Activated CD8-positive, alpha-beta memory T cell treated with anti-CD3 and anti-CD28 coated beads, Interleukin-2, amount 10 ng/mL, durations not matched to agents 7 days and 5 days (primary cell): ENCODE measurements at regions of chr12 and their contacts with region 1.

Region 1: DNA sequence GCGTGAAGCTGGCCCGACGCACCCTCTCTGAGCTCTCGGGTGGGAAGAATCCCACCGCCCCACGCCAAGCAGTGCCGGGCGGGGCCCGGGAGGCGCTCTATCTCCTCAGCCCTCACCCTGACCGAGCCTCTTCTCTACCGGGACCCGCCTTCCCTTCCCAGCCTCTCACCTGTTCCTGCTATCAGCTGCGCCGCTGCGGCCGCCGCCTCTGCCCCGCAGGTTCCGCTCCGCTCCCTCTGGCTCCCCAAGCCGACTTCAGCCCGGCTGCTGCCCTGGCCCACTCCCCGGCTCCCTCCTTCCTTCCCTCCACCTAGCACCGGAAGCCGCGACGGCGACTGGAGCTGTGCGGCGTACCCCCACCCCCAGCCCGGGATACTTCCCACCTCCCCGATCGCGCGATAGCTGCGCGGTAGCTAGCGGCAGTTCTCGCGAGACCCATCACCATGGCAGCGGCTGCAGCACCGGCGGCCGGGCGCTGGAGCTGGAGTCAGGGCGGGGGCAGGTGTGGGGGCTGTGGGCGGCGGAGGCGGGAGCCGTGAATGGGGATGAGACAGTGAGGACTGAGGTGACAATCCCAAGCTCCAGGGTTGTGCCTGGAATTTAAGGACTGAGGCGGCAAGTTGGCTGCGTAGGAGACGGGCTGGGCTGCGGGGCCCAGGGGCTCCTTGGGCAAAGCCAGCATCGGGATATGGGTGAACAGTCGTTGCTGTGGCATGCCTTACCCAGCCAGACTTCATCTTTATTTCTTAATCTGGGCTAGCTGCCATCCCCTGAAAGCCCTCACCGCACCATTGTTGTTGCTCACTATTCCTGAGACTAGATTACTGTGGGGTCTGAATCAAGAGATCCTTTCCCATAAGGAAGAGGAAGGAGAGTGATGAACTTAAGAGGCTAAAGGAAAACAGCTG is at the start of gene ARF3:
- DNase-seq: peak; percentile 95
- ATAC-seq: peak; percentile 97
- H3K4me3 Mint-ChIP-seq: peak within 1 kb of the TSS; percentile 94
- H3K27ac Mint-ChIP-seq: peak within 1 kb of the TSS; percentile 82
- H3K4me1 Mint-ChIP-seq: peaks cover 26% of the 10 kb centered on the region
- H3K27me3 Mint-ChIP-seq: peaks cover 20% of the 10 kb centered on the region
- total RNA-seq, gene ARF3: 89.4 to 118 TPM

Region 2: DNA sequence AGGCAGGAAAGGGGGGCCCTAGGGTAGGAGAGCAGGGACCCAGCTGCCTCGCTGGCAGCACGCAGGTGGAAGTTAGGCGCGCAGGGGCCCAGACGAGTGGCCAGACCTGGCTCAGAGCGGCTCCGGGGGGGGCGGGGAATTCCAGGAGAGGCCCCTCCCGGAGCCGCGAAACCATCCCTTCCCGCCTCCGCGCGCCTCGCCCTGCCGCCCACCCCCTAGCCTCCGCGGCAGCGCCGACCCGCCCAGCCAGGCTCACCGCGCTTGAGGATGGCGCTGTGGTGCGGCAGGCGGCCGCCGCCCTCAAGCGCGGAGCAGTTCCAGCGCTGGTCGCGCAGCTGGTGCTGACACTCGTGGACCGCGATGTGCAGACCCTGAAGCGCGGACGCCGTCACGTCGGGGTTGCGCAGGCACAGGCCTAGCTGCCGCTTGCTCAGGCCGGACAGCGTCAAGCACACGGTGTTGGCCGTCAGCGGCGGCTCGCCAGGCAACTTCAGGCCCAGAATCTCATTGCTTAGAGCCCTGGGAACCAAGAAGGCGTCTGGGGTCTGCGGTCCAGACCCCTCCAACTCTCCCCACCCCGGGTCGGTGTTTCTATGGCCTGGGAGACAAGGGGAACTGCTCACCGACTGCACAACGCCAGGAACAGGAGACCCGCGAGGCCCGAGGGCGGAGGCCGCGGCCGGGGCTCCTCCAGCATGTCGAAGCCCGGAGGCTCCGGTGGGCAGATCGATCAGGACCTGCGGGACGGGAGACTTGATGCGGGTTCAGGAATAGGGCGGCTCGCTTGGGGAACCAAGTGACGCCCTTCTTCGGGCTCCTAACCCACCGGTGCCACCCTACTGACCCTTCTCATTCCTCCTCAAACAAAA is 12.7 kb after region 1 on chr12:
- CTCF ChIA-PET with region 1: interaction called, 16 read pairs
- DNase-seq: no peak
- ATAC-seq: peak; percentile 37
- H3K4me3 Mint-ChIP-seq: no peak overlapping the region
- H3K27ac Mint-ChIP-seq: no peak overlapping the region
- H3K4me1 Mint-ChIP-seq: peaks cover 33% of the 10 kb centered on the region
- H3K27me3 Mint-ChIP-seq: peaks cover 77% of the 10 kb centered on the region

Region 3: DNA sequence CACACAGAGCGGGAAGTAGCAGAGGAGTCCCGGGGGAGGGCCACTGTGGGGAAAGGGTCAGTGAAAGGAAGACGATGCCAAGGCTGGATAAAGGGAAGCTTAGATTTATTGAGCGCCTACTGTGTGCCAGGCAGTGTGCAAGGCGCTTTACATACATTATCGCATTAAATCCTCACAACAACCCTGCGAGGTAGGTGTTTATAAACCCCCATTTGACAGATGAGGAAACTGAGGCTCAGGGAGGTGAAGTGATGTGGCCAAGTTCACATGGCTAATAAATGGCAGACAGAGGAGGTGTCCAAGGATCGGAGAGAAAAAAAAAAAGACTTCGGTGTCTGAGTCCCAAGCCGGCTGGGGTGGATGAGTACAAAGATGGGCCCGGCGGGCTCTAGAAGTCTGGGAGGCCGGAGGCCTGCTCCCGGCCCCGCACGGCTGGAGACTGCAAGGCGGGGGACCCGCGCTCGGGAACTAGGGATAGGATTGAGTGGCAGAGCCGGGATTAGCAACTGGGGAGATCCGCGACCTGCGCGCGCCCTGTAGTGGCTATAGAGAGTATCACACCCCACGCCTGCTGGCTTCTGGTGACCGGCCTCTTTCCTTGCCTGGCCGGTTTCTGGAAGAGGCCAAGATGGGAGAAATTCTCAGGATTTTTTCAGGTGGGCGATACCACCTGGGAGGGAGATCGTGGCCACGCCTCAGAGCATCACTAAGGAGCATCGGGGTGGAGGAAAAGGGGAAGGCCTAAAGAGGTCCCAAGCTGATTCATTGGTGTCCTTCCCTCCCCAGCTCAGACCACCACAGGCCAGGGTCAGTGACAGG is 37.9 kb after region 1 on chr12:
- CTCF ChIA-PET with region 1: interaction called, 921 read pairs
- DNase-seq: peak; percentile 65
- ATAC-seq: peak; percentile 44
- H3K4me3 Mint-ChIP-seq: no peak overlapping the region
- H3K27ac Mint-ChIP-seq: no peak overlapping the region
- H3K4me1 Mint-ChIP-seq: peaks cover 33% of the 10 kb centered on the region
- H3K27me3 Mint-ChIP-seq: peaks cover 60% of the 10 kb centered on the region